Activated naive CD8-positive, alpha-beta T cell treated with anti-CD3 and anti-CD28 coated beads, Interleukin-2, amount 10 ng/mL, durations not matched to agents 7 days and 5 days (primary cell): ENCODE measurements at regions of chr1 and their contacts with region 1.

Region 1: GRCh38 chr1:89274411-89274857 is 1.8 kb upstream of the GBP5 start:
- DNase-seq: no peak
- ATAC-seq: peak; percentile 13
- H3K4me3 Mint-ChIP-seq: peak overlapping the region; percentile 86
- H3K27ac Mint-ChIP-seq: peak overlapping the region; percentile 98
- H3K4me1 Mint-ChIP-seq: peaks cover 55% of the 10 kb centered on the region
- H3K27me3 Mint-ChIP-seq: no peaks in the 10 kb centered on the region

Region 2: DNA sequence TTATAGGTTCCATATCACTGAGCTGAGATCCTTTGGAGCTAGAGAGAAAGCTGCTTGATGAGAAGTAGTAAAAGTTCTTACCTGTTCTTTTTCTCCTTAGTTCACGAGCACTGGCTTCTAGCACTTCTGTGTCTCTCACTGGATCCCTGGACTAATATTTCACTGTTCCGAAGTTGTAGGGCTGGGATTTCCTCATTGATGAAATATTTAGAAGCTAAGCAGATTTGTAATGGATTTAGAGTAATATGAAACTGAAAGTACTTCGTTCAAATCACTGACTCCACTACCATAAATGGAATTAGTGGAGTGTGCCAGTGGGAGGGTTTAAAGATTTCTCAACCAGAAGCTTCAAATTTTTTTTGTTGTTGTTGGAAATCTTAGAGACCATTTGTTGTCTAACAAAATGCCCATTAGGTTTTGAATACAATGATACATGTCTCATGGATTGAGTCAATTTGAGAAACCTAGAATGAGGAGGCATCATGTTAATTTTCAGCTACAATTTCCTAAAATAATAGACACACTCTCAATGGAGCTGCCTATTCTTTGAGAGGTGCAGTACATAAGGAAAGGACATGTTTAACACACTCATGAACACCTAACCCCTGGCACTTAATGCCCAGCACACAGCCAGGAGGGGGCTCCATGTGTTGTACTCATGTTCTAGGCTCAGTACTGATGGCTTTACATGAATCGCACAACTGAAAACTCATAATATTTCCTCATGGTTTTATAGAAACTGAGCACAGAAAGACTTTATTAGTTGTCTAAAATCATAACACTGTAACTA is 209.2 kb before region 1 on chr1 and contains the start of gene GBP1:
- POLR2A ChIA-PET with region 1: interaction called, 14 read pairs
- DNase-seq: no peak
- ATAC-seq: peak; percentile 81
- H3K4me3 Mint-ChIP-seq: peak within 1 kb of the TSS; percentile 92
- H3K27ac Mint-ChIP-seq: peak within 1 kb of the TSS; percentile 94
- H3K4me1 Mint-ChIP-seq: peaks cover 45% of the 10 kb centered on the region
- H3K27me3 Mint-ChIP-seq: no peaks in the 10 kb centered on the region
- total RNA-seq, gene GBP1: 150 to 160 TPM

Region 3: GRCh38 chr1:89198491-89199072 is 75.9 kb before region 1 on chr1 and contains the start of gene GBP4:
- POLR2A ChIA-PET with region 1: interaction called, 78 read pairs
- DNase-seq: peak; percentile 62
- ATAC-seq: peak; percentile 82
- H3K4me3 Mint-ChIP-seq: peak within 1 kb of the TSS; percentile 94
- H3K27ac Mint-ChIP-seq: peak within 1 kb of the TSS; percentile 94
- H3K4me1 Mint-ChIP-seq: peaks cover 49% of the 10 kb centered on the region
- H3K27me3 Mint-ChIP-seq: no peaks in the 10 kb centered on the region
- total RNA-seq, gene GBP4: 61.9 to 69.7 TPM

Region 4: DNA sequence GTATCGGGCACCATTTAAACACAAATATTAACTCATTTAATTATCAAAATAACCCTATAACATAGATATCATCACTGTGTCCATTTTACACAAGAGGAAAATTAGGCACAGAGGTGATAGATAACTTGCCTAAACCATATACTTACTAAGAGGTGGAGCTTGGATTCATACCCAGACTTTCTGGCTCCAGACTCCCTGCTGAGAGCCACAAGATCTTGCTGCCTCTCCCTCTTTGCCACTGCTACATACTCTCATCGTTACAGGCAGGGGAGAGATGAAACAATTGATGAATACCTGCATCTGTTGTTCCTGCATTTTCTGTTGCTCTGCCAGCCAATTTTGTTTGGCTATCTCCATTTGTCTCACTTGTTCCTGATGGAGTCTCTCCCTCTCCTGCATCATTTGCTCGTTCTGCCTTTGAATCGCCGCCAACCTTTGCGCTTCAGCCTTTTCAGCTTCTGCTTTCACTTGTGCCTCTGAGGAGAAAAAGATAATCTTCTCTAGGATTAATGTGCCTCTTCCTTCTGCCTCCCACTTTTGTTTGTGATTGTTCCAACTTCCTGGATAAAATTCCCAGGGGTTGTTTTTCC is 12.4 kb before region 1 on chr1:
- POLR2A ChIA-PET with region 1: interaction called, 77 read pairs
- DNase-seq: no peak
- ATAC-seq: no peak
- H3K4me3 Mint-ChIP-seq: peak overlapping the region; percentile 77
- H3K27ac Mint-ChIP-seq: peak overlapping the region; percentile 71
- H3K4me1 Mint-ChIP-seq: peaks cover 66% of the 10 kb centered on the region
- H3K27me3 Mint-ChIP-seq: no peaks in the 10 kb centered on the region

Region 5: DNA sequence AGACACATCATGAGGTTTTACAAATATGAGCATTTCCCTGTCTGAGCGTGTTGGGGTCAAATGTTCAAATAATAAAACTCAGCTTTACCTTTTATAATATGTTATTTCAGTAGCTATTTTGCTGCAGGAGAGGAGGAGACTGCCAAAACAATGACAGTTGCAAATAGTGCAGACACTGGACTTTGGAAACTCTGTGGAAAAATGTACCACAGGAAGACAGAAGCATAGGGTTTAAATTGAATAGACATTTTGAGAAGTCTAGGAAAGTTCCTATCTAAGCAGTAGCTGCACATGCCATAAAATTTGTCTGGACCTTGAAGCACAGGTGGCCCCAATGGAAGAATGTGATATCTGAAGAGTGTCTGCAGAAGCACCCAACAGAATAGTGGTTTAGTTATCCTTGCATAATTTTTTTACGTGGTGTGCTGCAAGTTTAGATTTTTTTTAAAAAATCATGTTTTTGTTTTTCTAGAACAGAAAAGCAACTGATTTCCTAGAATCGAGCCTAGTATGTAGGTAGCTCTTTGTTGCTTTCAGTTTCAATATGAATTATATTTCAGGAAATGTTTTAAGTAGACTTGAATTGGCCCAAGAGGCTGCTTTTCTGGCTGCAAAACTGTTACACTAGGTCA is 12.2 kb after region 1 on chr1:
- POLR2A ChIA-PET with region 1: interaction called, 56 read pairs
- DNase-seq: no peak
- ATAC-seq: peak; percentile 88
- H3K4me3 Mint-ChIP-seq: peak overlapping the region; percentile 67
- H3K27ac Mint-ChIP-seq: peak overlapping the region; percentile 95
- H3K4me1 Mint-ChIP-seq: peaks cover 54% of the 10 kb centered on the region
- H3K27me3 Mint-ChIP-seq: no peaks in the 10 kb centered on the region

Region 6: GRCh38 chr1:89310505-89310904 is 36.1 kb after region 1 on chr1:
- POLR2A ChIA-PET with region 1: interaction called, 18 read pairs
- DNase-seq: no peak
- ATAC-seq: peak; percentile 75
- H3K4me3 Mint-ChIP-seq: peak overlapping the region; percentile 60
- H3K27ac Mint-ChIP-seq: peak overlapping the region; percentile 90
- H3K4me1 Mint-ChIP-seq: peaks cover 39% of the 10 kb centered on the region
- H3K27me3 Mint-ChIP-seq: no peaks in the 10 kb centered on the region

Region 7: GRCh38 chr1:89358287-89358893 is 84.0 kb after region 1 on chr1:
- POLR2A ChIA-PET with region 1: interaction called, 17 read pairs
- DNase-seq: peak; percentile 80
- ATAC-seq: peak; percentile 82
- H3K4me3 Mint-ChIP-seq: peak overlapping the region; percentile 51
- H3K27ac Mint-ChIP-seq: peak overlapping the region; percentile 72
- H3K4me1 Mint-ChIP-seq: peaks cover 43% of the 10 kb centered on the region
- H3K27me3 Mint-ChIP-seq: peaks cover 2% of the 10 kb centered on the region